H1 (cell line): ENCODE measurements at regions of chr5 and their contacts with region 1.

Region 1: GRCh38 chr5:134465816-134466240 is 54.1 kb upstream of the CDKN2AIPNL start:
- DNase-seq: peak; percentile 47 to 95
- H3K4me3 ChIP-seq: peak overlapping the region; percentile 62 to 80 (median 68)
- H3K27ac ChIP-seq: peak overlapping the region; percentile 75; the same call in 1 of the 2 replicates
- H3K4me1 ChIP-seq: peaks cover 2 to 19% (median 5%) of the 10 kb centered on the region in 4 experiments
- H3K27me3 ChIP-seq: no peaks in the 10 kb centered on the region
- CTCF ChIP-seq: no peak
- EP300 ChIP-seq: no peak
- POLR2A ChIP-seq: peak in 1 of 2 experiments; percentile 57; a peak in 1 of 3 replicates
- RAD21 ChIP-seq: no peak; a peak in 1 of 4 replicates

Region 2: DNA sequence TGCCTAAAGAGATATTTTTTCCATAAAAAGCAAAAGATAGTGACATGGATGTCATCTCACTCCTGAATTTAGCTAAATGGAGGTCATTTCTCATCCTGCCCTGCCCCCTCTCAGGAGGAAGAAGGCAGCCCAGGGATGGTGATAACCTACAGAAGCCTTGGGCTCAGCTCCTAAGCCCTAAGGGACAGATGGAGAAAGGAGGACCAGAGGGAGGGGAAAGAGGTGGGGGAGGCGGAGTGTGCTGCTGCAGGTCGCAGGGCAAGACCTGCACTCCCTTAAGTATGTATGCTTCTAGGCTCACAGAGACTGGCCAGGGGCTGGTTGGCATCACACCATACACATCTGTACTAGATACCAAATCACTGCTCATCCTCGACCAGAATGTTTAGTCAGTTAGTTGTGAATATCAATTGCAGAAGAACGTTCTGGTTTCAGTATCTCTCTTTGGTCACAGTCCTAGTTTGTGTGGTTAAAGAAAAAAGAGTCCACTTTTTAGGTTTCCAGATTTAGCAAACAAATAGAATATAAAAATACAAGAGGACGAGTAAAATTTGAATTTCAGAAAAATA is 35.7 kb before region 1 on chr5:
- CTCF ChIA-PET with region 1: interaction called, 13 read pairs
- POLR2A ChIA-PET with region 1: interaction called, 27 read pairs
- DNase-seq: no peak
- H3K4me3 ChIP-seq: peak overlapping the region in 1 of 4 experiments; percentile 44; a peak in 2 of 8 replicates
- H3K27ac ChIP-seq: no peak overlapping the region
- H3K4me1 ChIP-seq: peaks cover 6 to 27% (median 16%) of the 10 kb centered on the region in 4 experiments; a peak in 6 of 7 replicates
- H3K27me3 ChIP-seq: peaks cover 0 to 1% (median 0%) of the 10 kb centered on the region in 4 experiments; a peak in 1 of 7 replicates
- CTCF ChIP-seq: peak in 1 of 3 experiments; percentile 7; a peak in 1 of 4 replicates
- EP300 ChIP-seq: no peak
- POLR2A ChIP-seq: no peak
- RAD21 ChIP-seq: no peak; a peak in 1 of 4 replicates

Region 3: GRCh38 chr5:134446938-134447337 is 18.9 kb before region 1 on chr5:
- CTCF ChIA-PET with region 1: interaction called, 13 read pairs
- POLR2A ChIA-PET with region 1: interaction called, 14 read pairs
- DNase-seq: no peak
- H3K4me3 ChIP-seq: no peak overlapping the region
- H3K27ac ChIP-seq: no peak overlapping the region
- H3K4me1 ChIP-seq: peaks cover 0 to 7% (median 0%) of the 10 kb centered on the region in 4 experiments; a peak in 1 of 7 replicates
- H3K27me3 ChIP-seq: no peaks in the 10 kb centered on the region
- CTCF ChIP-seq: no peak
- EP300 ChIP-seq: no peak
- POLR2A ChIP-seq: no peak
- RAD21 ChIP-seq: no peak

Region 4: DNA sequence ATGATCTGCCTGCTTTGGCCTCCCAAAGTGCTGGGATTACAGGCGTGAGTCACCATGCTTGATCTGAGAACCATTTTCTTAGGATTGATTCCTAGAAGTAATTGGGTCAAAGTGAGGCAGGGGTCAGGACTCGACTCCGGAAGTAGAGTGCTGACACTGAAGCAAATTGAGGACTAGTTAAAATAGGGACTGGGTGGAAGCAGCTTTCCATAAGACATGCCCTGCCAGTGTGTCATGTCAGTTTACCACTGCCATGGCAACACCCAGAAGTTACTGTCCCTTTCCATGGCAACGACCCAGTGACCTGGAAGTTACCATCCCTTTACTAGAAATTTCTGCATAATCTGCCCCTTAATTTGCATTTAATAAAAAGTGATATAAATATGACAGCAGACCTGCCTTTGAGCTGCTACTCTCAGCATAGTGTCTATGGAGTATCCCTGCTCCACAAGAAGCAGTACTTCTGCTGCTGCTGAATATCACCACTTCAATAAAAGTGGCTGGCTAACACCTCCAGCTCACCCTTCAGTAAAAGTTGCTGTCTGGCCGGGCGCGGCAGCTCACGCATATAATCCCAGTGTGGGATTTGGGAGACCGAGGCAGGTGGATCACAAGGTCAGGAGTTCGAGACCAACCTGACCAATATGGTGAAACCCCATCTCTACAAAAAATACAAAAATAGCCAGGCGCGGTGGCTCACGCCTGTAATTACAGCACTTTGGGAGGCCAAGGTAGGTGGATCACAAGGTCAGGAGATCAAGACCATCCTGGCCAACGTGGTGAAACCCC is 11.8 kb after region 1 on chr5:
- CTCF ChIA-PET with region 1: interaction called, 8 read pairs
- POLR2A ChIA-PET with region 1: interaction called, 10 read pairs
- DNase-seq: no peak
- H3K4me3 ChIP-seq: no peak overlapping the region
- H3K27ac ChIP-seq: no peak overlapping the region
- H3K4me1 ChIP-seq: no peaks in the 10 kb centered on the region
- H3K27me3 ChIP-seq: no peaks in the 10 kb centered on the region
- CTCF ChIP-seq: no peak
- EP300 ChIP-seq: no peak
- POLR2A ChIP-seq: no peak
- RAD21 ChIP-seq: no peak

Region 5: DNA sequence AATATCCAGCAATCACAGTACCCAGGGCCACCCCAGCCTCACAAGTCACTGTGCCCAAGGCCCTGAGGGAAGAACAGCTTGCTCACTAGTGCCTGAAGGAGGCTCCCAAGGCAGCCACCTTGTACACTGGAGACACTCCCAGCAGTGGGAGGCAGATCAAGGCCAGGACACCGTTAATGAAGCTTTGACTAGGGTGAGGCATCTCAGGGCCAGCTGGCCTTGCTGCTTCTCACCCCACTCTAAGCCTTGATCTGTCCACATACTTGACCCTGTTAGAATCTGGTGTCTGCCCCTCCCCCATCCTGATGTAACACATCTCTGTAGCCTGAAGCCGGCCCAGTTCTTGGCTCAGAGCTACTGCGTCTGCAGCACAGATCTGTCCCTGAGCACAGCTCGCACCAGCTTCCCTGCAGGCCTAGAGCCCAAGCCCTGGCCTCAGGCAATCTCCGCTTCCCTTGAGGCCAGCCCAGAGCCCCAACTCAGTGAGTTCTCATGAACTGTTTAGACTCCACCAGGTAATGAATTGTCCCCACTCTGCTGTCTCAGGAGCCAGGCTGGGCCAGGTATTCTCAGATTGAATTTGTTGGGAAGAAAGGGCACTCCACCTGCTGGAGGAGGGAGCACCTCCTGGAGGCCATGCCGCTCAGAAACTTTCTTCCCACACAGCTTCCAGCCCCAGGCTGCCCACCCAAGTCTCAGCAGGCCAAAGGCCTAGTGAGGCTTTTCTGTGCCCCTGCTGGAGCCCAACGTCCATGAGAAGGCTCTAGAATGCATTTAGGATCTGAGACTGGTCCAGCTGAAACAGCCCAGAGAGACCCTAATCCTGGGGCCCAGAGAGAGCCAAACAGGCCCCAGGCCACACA is 46.2 kb after region 1 on chr5:
- CTCF ChIA-PET with region 1: interaction called, 30 read pairs
- POLR2A ChIA-PET with region 1: interaction called, 69 read pairs
- DNase-seq: peak in 1 of 2 experiments; percentile 73
- H3K4me3 ChIP-seq: peak overlapping the region in 2 of 4 experiments; percentile 20 to 32; a peak in 3 of 8 replicates
- H3K27ac ChIP-seq: peak overlapping the region; percentile 77
- H3K4me1 ChIP-seq: peaks cover 16 to 23% (median 19%) of the 10 kb centered on the region in 4 experiments
- H3K27me3 ChIP-seq: no peaks in the 10 kb centered on the region
- CTCF ChIP-seq: peak; percentile 49 to 56 (median 54)
- EP300 ChIP-seq: no peak
- POLR2A ChIP-seq: peak; percentile 52 to 63
- RAD21 ChIP-seq: peak; percentile 61 to 73

Region 6: GRCh38 chr5:134541736-134542376 is 76.0 kb after region 1 on chr5:
- CTCF ChIA-PET with region 1: interaction called, 12 read pairs
- POLR2A ChIA-PET with region 1: interaction called, 5 read pairs
- DNase-seq: peak in 1 of 2 experiments; percentile 85
- H3K4me3 ChIP-seq: no peak overlapping the region
- H3K27ac ChIP-seq: no peak overlapping the region
- H3K4me1 ChIP-seq: peaks cover 6 to 17% (median 9%) of the 10 kb centered on the region in 4 experiments
- H3K27me3 ChIP-seq: no peaks in the 10 kb centered on the region
- CTCF ChIP-seq: no peak
- EP300 ChIP-seq: no peak
- POLR2A ChIP-seq: no peak
- RAD21 ChIP-seq: peak in 1 of 2 experiments; percentile 23; a peak in 2 of 4 replicates

Region 7: DNA sequence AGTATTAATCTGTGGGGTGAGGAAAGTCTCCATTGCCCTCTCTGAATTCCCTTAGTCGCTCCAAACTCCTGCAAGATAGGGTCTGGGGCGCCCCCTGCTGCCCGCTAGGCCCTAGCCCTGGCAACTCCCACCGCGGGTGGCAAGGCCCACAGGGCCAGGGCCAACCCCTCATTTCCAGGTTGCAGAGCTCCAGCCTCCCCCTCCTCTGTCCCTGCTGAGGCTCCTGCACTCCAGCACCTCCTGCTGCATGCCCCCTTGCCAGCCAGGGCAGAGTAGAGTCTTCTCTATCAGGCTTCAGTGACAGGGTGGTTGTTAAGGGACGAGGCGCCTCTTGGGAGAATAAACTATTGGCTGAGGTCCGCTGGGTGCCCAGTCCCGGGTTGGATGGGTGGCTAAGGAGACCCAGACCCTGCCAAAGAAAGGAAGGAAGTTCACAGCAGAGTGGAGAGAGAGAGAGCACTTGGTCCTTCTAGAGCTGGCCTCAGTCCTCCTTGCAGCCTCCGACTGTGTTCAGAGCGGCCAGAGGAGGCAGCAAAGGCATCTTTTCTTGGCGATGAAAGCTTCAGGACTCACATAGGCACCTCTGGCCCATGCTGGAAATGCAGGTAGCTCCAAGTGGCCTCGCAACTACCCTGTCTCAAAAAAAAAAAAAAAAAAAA is 121.2 kb after region 1 on chr5:
- CTCF ChIA-PET with region 1: interaction called, 20 read pairs
- POLR2A ChIA-PET with region 1: interaction called, 4 read pairs
- DNase-seq: peak; percentile 81 to 99
- H3K4me3 ChIP-seq: 0 out of 8 replicates have a peak overlapping the region, but pooled peaks of 1 of the 4 experiments have one; percentile 38
- H3K27ac ChIP-seq: no peak overlapping the region
- H3K4me1 ChIP-seq: peaks cover 6 to 12% (median 9%) of the 10 kb centered on the region in 4 experiments
- H3K27me3 ChIP-seq: no peaks in the 10 kb centered on the region
- CTCF ChIP-seq: peak in 2 of 3 experiments; percentile 91 to 97; a peak in 3 of 4 replicates
- EP300 ChIP-seq: no peak
- POLR2A ChIP-seq: no peak
- RAD21 ChIP-seq: peak; percentile 89 to 90

Region 8: DNA sequence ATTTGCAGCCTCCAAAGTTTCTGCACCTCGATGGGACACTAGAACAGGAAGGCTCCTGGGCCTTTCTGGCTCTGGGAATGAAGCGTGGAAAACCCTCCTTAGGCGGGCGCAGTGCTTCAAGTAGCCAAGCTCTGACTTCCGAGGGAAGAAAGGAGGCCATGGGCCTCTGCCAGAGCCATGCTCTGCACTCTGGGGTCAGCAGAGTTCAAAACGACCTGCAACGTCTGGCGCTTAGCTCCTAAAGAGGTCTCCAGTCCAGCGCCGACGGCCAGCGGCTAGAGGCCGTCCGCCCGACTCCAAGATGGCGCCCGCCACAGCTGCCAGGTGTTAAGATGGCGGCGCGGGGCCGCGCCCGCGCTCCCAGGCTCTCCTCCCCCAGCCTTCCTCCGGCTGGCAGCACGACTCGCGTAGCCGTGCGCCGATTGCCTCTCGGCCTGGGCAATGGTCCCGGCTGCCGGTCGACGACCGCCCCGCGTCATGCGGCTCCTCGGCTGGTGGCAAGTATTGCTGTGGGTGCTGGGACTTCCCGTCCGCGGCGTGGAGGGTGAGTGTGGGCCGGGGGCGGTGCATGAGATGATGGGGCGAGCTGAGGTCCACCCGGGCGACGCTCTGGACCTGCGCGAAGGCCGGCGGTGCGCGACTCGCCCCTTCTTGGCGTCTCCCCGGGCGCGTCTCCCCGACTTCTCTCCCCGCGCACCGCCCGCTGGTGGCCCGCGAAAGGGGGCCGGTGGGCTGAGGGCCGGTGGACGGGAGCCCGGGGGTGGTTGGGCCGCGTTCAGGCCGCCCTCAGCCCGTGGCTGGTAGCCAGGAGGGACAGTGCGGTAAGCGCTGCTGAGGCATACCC is 408.4 kb after region 1 on chr5 and contains the start of gene TXNDC15:
- CTCF ChIA-PET with region 1: no interaction called
- POLR2A ChIA-PET with region 1: no interaction called
- DNase-seq: peak; percentile 61 to 89
- H3K4me3 ChIP-seq: peak within 1 kb of the TSS; percentile 73 to 93 (median 78)
- H3K27ac ChIP-seq: peak within 1 kb of the TSS; percentile 79; the same call in 1 of the 2 replicates
- H3K4me1 ChIP-seq: peaks cover 0 to 12% (median 8%) of the 10 kb centered on the region in 4 experiments; a peak in 6 of 7 replicates
- H3K27me3 ChIP-seq: no peaks in the 10 kb centered on the region
- CTCF ChIP-seq: no peak
- EP300 ChIP-seq: no peak
- POLR2A ChIP-seq: peak in 1 of 2 experiments; percentile 91; a peak in 2 of 3 replicates
- RAD21 ChIP-seq: no peak
- total RNA-seq, gene TXNDC15: 30.8 and 34.5 TPM in 2 replicates